ENCODE measurements at regions of chr2 and their contacts with region 1.

Region 1: DNA sequence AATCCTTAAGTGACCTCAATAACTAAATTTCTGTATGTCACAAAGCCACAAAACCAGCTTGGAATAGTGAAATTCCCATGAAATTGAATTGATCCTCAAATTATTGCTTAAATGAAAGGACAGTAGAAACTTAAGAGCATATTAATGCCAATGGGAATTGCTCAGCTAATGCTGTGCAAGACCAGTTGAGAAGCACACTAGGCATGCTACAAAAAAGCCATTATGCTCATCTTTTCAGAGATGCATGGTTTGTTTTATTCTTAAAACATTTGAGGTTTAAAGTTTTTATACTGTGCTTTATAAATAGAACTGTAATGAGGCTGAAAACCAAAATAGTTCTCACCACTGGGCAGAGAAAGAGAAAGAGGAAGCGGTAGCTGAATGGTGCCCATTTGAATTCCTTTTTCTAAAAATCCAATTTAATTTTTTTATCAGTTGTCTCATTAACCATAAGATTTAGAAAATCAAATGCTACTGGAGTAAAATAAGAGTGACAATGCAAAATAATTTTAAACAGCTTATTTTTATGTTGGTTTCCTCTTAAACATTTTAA is 98.6 kb downstream of the LNPK start:
- DNase-seq: no peak
- ATAC-seq: peak in 1 of 8 donors; percentile 53
- H3K4me3 ChIP-seq: no peak overlapping the region
- H3K27ac ChIP-seq: no peak overlapping the region
- H3K4me1 ChIP-seq: peaks cover 0 to 14% (median 8%) of the 10 kb centered on the region in 9 donors
- H3K27me3 ChIP-seq: no peaks in the 10 kb centered on the region
- CTCF ChIP-seq: no peak

Region 2: DNA sequence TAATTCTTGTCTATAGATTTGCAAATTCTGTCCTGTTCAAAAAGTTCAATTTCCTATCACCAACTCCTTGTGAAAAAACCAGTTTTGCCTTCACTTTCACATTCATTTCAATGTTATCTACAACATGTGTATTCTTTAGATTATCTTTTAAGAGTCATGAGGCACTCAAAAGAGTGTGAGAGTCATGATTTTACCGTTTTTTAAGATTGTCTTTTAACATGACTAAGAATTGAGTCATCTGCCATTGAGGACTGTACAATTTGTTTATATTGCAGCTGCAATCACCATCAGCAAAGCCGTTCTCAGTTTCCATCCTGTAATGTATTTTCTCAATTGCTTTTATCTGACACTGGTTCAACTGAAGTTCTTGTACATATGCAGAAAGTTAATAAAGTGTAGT is 177.2 kb before region 1 on chr2:
- intact Hi-C with region 1: no loop called
- DNase-seq: no peak
- ATAC-seq: no peak
- H3K4me3 ChIP-seq: no peak overlapping the region
- H3K27ac ChIP-seq: no peak overlapping the region
- H3K4me1 ChIP-seq: no peaks in the 10 kb centered on the region
- H3K27me3 ChIP-seq: peaks cover 0 to 3% (median 0%) of the 10 kb centered on the region in 7 donors
- CTCF ChIP-seq: no peak

Region 3: DNA sequence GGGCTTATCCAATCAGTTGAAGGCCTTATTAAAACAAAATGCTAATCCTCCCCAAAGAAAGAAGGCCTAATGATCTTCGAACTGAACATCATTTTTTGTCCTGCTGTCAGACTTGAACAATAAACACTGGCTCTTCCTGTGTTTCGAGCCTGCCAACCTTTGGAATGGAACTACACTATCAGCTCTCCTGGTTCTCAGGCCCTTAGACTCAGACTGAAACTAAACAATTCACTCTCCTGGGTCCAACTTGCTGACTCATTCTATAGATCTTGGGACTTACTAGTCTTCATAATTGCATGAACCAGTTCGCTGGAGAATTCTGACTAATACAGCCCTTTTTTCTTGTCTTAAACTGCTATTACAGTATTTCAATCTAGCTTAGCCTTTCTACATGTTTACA is 136.6 kb before region 1 on chr2:
- intact Hi-C with region 1: loop called in 1 of 10 experiments (anchors 5 kb)
- DNase-seq: no peak
- ATAC-seq: no peak
- H3K4me3 ChIP-seq: no peak overlapping the region
- H3K27ac ChIP-seq: no peak overlapping the region
- H3K4me1 ChIP-seq: no peaks in the 10 kb centered on the region
- H3K27me3 ChIP-seq: no peaks in the 10 kb centered on the region
- CTCF ChIP-seq: no peak

Measured in heart right ventricle (tissue), 16 donors.